Aorta (tissue), 5 donors: ENCODE measurements at regions of chr6 and their contacts with region 1.

Region 1: DNA sequence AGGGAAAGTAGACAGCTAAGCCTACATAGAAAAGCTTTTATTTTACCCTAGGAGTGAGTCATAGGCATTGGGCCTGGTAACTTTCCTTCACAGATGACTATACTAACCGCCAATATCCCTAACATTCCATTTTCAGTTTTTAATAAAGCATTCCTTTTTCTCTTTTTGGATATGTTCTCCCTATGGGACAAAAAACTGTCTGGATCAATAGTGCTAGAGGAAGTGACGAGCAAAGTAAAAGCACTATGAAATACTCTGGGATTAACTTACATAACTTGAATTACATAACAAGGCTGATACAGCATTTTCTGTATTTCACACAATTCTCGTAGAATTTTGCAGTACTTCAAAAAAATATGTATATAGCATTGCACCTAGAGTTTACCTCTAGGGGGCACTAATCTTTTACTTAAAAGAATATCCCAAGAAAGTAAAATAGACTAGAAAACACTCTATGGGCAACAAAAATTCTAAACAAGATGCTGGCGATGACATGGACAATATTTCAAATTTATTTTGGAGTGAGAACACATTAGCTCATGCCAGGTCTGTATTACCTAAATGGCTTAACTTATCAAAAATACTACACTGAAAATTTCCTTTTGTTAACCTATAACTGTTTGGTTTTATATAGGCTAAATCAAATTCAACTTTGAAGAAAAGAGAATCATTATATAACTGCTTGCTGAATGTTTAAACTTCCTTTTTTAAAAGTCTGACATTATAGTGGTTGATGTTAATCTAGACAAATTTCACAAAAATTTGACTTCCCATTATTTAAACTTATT is 66.3 kb upstream of the DST start:
- DNase-seq: no peak
- ATAC-seq: peak; percentile 77
- H3K4me3 ChIP-seq: no peak overlapping the region
- H3K27ac ChIP-seq: no peak overlapping the region
- H3K4me1 ChIP-seq: peaks cover 0 to 3% of the 10 kb centered on the region in 2 donors
- H3K27me3 ChIP-seq: no peaks in the 10 kb centered on the region

Region 2: GRCh38 chr6:56618050-56618449 is 91.0 kb before region 1 on chr6:
- intact Hi-C with region 1: no loop called
- DNase-seq: no peak
- ATAC-seq: no peak
- H3K4me3 ChIP-seq: no peak overlapping the region
- H3K27ac ChIP-seq: no peak overlapping the region
- H3K4me1 ChIP-seq: no peaks in the 10 kb centered on the region
- H3K27me3 ChIP-seq: no peaks in the 10 kb centered on the region

Region 3: DNA sequence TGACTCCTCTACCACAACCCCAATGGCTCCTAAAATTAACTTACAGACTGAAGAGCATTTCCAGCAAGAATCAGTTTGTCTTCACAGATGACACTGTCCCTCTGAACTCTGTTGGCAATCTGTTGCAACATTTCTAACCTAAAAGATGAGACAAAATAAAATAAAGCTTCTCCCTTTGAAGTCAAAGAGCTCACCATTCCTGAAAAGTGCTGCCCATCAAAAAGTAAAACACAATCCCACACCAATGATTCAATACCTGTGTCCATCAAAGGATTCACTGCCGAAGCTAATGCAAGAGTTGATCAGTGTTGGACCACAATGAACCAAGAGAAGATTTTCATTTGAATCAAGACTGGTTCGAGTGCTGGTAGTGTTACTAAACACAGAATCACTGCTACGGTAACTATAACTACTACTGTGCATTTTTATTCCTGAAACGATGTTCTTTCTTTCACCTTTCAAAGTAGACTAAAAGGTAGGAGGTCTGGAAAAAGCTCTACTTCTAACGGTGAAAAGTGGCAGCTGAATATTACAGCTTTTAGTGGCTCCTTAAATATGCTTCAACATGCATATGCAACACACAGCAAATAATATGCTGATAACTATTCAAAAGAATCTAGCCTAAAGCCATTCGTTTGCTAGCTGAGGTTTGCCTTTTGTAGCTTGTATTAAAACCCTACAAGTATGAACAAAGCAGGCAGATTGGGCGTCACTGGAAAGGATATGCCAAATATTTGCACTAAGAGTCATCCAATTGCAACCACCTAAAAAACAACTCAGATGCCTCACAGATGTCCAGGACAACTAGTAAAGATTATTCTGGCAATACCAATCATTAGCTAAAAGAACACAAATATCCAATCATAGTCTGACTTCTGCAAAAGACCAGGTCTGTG is 66.4 kb before region 1 on chr6 and contains the start of gene DST:
- intact Hi-C with region 1: no loop called
- DNase-seq: no peak
- ATAC-seq: peak; percentile 58
- H3K4me3 ChIP-seq: no peak within 1 kb of the TSS
- H3K27ac ChIP-seq: no peak within 1 kb of the TSS
- H3K4me1 ChIP-seq: peaks cover 0 to 3% of the 10 kb centered on the region in 2 donors
- H3K27me3 ChIP-seq: no peaks in the 10 kb centered on the region
- total RNA-seq, gene DST: 485 to 578 TPM

Region 4: DNA sequence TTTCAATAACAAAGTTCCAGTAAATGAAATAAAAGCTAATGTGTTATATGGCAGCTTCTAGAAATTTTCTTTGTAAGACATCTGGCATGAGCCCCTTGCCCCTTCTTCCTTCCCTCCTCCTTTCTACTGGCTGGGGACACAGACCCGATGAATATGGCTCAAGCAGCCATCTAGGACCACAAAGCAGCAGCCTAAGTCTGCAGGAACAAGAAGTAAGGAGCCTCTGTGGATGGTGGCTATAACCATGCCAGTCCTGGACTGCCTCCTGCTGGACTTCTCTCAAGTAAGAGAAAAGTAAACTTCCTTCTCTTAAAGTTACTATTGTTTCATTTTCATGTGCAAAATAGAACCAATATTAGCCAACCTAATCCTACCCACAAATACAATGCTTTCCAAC is 48.6 kb after region 1 on chr6:
- intact Hi-C with region 1: loop called (anchors 5 to 10 kb)
- DNase-seq: no peak
- ATAC-seq: peak; percentile 67
- H3K4me3 ChIP-seq: no peak overlapping the region
- H3K27ac ChIP-seq: peak overlapping the region in 1 of 2 donors; percentile 30
- H3K4me1 ChIP-seq: peaks cover 0 to 6% of the 10 kb centered on the region in 2 donors
- H3K27me3 ChIP-seq: no peaks in the 10 kb centered on the region

Region 5: DNA sequence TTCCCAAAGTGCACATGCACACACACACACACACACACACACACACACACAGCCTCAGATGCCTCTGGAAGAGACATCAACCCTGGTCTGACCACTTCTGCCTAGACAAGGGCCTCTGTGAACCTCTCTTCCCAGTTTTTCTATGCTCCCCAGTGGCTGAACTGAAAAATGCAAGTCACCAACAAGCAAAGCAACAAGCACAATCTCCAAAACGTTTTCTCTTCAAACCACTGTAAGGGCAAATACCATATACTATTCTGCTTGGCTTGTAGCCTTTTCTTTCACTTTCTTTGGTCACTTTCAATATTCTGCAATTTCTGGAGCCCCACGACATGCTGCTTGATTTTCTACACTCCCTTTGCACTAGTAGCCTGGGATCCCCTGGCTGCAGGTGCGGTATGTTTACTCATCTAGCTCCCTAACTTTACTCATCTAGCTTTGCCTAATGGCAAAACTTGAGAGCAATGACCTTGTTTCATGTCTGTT is 55.1 kb after region 1 on chr6:
- intact Hi-C with region 1: loop called (anchors 5 to 10 kb)
- DNase-seq: no peak
- ATAC-seq: no peak
- H3K4me3 ChIP-seq: no peak overlapping the region
- H3K27ac ChIP-seq: peak overlapping the region in 1 of 2 donors; percentile 36
- H3K4me1 ChIP-seq: peaks cover 0 to 4% of the 10 kb centered on the region in 2 donors
- H3K27me3 ChIP-seq: no peaks in the 10 kb centered on the region

Region 6: GRCh38 chr6:56843573-56844349 is 134.8 kb after region 1 on chr6:
- intact Hi-C with region 1: loop called (anchors 5 kb)
- DNase-seq: peak; percentile 85 to 89
- ATAC-seq: peak; percentile 92
- H3K4me3 ChIP-seq: peak overlapping the region; percentile 62 to 76
- H3K27ac ChIP-seq: peak overlapping the region; percentile 29 to 87
- H3K4me1 ChIP-seq: no peaks in the 10 kb centered on the region
- H3K27me3 ChIP-seq: no peaks in the 10 kb centered on the region

Region 7: DNA sequence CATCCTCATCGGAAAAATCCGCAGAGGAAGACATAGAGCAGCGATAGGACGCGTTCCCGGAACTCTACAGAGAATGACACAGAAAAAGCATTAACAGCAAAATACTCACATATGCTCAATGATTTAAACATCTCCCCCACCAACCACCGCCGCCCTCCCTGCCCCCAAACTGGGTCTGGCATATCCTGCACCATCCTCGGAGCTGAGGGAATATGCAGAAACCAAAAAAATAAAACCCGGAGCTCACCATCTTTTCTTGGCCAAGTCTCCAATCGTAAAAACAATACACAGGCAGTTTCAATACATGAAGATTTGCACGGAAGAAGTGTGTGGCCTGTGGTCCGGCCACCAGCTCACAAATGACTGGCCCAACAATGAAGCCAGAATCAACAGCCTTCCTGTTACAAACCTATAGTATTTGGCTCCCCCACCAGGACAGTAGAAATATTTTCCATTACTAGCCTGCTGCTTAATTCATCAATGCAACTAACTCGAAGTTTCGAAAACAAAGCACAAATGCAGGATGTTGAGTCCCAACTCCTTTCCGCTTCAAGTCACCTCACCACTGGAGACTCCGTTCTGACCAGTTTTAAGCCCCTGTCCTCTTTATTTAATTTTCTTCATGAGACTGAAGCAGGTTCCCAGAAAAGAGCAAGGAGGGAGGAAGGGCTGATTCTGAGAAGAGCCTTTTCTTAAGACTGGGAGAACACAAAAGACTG is 142.7 kb after region 1 on chr6:
- intact Hi-C with region 1: loop called in 1 of 2 experiments (anchors 2 kb)
- DNase-seq: no peak
- ATAC-seq: peak; percentile 92
- H3K4me3 ChIP-seq: peak overlapping the region; percentile 57 to 98
- H3K27ac ChIP-seq: peak overlapping the region; percentile 16 to 71
- H3K4me1 ChIP-seq: peaks cover 0 to 3% of the 10 kb centered on the region in 2 donors
- H3K27me3 ChIP-seq: no peaks in the 10 kb centered on the region